CD4-positive, alpha-beta T cell (primary cell): ENCODE measurements at regions of chr14 and their contacts with region 1.

Region 1: GRCh38 chr14:102356280-102356679 is 6.4 kb downstream of the CINP start:
- DNase-seq: no peak
- ATAC-seq: no peak
- H3K4me3 ChIP-seq: no peak overlapping the region
- H3K4me3 Mint-ChIP-seq: no peak overlapping the region
- H3K27ac ChIP-seq: no peak overlapping the region
- H3K27ac Mint-ChIP-seq: no peak overlapping the region
- H3K4me1 ChIP-seq: peaks cover 7% of the 10 kb centered on the region
- H3K4me1 Mint-ChIP-seq: peaks cover 11% of the 10 kb centered on the region
- H3K27me3 ChIP-seq: no peaks in the 10 kb centered on the region
- H3K27me3 Mint-ChIP-seq: no peaks in the 10 kb centered on the region
- CTCF ChIP-seq: no peak

Region 2: DNA sequence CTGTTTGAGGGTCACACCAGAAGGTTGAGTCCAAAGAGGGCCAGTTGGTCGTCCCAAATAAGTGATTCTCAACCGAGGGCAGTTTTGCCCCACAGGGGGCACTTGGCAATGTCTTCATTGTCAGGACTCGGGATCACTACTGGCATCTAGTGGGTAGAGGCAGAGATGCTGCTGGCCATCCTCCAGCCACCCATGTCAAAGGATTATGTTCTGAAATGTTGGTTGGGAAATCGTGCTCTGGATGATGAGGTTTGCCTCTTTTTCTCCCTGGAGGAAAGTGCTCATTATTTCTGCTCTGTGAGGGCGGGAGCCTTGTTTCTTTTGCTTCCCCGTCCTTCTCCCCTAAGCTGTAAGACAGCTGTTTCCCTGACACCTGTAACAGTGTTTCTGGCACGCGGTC is 33.2 kb before region 1 on chr14:
- CTCF ChIA-PET with region 1: no interaction called
- POLR2A ChIA-PET with region 1: interaction called, 5 read pairs
- intact Hi-C with region 1: loop called in 1 of 2 experiments (anchors 2 kb)
- DNase-seq: peak in 4 of 14 experiments; percentile 25 to 64 (median 48)
- ATAC-seq: no peak
- H3K4me3 ChIP-seq: no peak overlapping the region
- H3K4me3 Mint-ChIP-seq: peak overlapping the region; percentile 75
- H3K27ac ChIP-seq: no peak overlapping the region
- H3K27ac Mint-ChIP-seq: peak overlapping the region; percentile 100
- H3K4me1 ChIP-seq: peaks cover 27% of the 10 kb centered on the region
- H3K4me1 Mint-ChIP-seq: peaks cover 27% of the 10 kb centered on the region
- H3K27me3 ChIP-seq: no peaks in the 10 kb centered on the region
- H3K27me3 Mint-ChIP-seq: peaks cover 6% of the 10 kb centered on the region
- CTCF ChIP-seq: peak; percentile 46

Region 3: DNA sequence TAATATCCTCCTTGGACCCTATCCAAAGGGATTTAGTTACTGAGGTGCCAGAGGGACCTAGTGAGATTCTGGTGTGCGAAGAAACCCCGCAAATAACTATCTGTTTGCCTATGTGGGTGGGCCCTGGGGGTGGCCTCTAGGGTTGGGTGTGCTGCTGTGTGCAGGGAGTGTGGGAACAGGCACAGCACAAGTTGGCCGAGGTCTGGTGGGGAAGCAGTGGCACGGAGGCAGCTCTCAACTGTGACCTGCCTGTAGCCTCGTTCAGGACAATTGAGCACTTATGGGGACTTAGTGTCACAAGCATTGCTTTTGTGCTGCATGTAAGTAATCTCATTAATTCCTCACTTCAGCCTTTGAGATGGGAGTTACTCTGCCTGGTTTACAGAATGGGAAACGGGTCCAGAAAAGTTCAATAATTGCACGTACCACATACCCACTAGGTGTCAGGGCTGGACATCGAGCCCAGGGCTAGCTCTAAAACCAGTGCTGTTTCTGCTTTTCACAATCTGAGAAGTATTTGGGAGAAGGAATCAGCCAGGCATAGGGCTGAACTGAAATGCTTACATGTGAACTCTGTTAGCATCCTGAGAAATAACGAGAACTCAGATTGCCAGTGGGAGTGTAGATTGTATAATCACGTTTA is 65.3 kb after region 1 on chr14:
- CTCF ChIA-PET with region 1: no interaction called
- POLR2A ChIA-PET with region 1: no interaction called
- intact Hi-C with region 1: no loop called
- DNase-seq: no peak
- ATAC-seq: no peak
- H3K4me3 ChIP-seq: no peak overlapping the region
- H3K4me3 Mint-ChIP-seq: no peak overlapping the region
- H3K27ac ChIP-seq: no peak overlapping the region
- H3K27ac Mint-ChIP-seq: no peak overlapping the region
- H3K4me1 ChIP-seq: no peaks in the 10 kb centered on the region
- H3K4me1 Mint-ChIP-seq: no peaks in the 10 kb centered on the region
- H3K27me3 ChIP-seq: no peaks in the 10 kb centered on the region
- H3K27me3 Mint-ChIP-seq: no peaks in the 10 kb centered on the region
- CTCF ChIP-seq: no peak